PC-9 (cell line): ENCODE measurements at regions of chr7 and their contacts with region 1.

Region 1: GRCh38 chr7:105493923-105494315 is 28.2 kb downstream of the PUS7 start:
- DNase-seq: no peak
- H3K4me3 ChIP-seq: no peak overlapping the region
- H3K27ac ChIP-seq: no peak overlapping the region
- H3K4me1 ChIP-seq: no peaks in the 10 kb centered on the region
- H3K27me3 ChIP-seq: no peaks in the 10 kb centered on the region
- CTCF ChIP-seq: no peak

Region 2: DNA sequence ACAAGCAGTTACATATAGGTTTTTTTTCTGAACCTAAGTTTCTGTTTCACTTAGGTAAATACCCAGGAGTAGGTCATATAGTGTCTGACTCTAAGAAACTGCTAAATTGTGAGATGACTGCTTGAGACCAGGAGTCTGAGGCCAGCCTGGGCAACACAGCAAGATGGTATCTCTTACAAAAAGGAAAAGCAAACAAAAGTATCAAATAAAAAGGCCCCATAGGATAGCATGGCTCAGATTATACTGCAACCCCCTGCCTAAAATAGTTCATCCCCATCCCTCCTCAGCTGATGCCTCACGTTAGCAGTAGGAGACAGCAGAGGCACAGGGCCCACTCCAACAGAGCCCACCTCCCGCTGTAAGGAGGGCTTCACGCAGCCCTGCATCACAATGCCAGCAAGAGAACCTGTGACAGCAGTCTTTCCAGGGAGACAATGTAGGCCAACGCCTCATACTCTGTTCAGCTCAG is 195.4 kb before region 1 on chr7:
- CTCF ChIA-PET with region 1: no interaction called
- POLR2A ChIA-PET with region 1: no interaction called
- intact Hi-C with region 1: no loop called
- DNase-seq: no peak
- H3K4me3 ChIP-seq: no peak overlapping the region
- H3K27ac ChIP-seq: no peak overlapping the region
- H3K4me1 ChIP-seq: no peaks in the 10 kb centered on the region
- H3K27me3 ChIP-seq: no peaks in the 10 kb centered on the region
- CTCF ChIP-seq: no peak

Region 3: DNA sequence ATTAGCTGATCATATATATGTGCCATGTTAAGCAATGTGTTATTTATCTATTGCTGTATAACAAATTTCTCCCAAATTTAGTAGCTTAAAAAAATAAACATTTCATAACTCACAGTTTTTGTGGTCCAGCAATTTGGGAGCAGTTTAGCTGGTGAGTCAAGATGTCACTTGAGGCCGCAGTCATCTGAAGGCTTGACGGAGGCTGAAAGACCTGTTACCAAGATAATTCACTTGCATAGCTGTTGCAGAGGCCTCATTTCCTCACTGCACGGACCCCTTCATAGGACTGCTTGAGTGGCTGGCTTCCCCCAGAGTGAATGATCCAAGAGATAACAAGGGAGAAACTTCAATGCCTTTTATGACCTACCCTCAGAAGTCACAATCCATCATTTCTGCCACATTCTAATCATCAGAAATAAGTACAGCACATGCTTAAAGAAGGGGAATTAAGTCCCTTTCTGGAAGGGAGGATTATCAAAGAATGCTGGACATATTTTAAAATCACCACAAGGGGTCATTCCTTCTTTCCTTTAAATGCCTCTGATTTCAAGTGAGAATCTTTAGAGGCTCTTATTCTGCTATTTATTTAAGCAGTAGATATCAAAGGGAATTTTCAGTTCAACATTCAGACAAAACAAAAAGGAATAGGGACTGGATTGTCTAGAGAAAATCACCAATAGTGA is 94.7 kb before region 1 on chr7:
- CTCF ChIA-PET with region 1: interaction called, 16 read pairs
- POLR2A ChIA-PET with region 1: no interaction called
- intact Hi-C with region 1: no loop called
- DNase-seq: no peak
- H3K4me3 ChIP-seq: no peak overlapping the region
- H3K27ac ChIP-seq: no peak overlapping the region
- H3K4me1 ChIP-seq: peaks cover 6% of the 10 kb centered on the region; the same call in 1 of the 2 replicates
- H3K27me3 ChIP-seq: no peaks in the 10 kb centered on the region
- CTCF ChIP-seq: peak; percentile 65